Activated CD4-positive, alpha-beta T cell treated with anti-CD3 and anti-CD28 coated beads for 36 hours (primary cell): ENCODE measurements at regions of chr6 and their contacts with region 1.

Region 1: GRCh38 chr6:33200219-33201146 is at the starts of genes RXRB and SLC39A7:
- DNase-seq: peak; percentile 100
- ATAC-seq: peak; percentile 64
- H3K4me3 Mint-ChIP-seq: peak within 1 kb of the TSS; percentile 100
- H3K27ac Mint-ChIP-seq: peak within 1 kb of the TSS; percentile 99
- H3K4me1 Mint-ChIP-seq: peaks cover 64% of the 10 kb centered on the region
- H3K27me3 Mint-ChIP-seq: no peaks in the 10 kb centered on the region
- total RNA-seq, gene RXRB: 41.0 to 45.4 TPM
- total RNA-seq, gene SLC39A7: 33.0 to 41.8 TPM

Region 2: DNA sequence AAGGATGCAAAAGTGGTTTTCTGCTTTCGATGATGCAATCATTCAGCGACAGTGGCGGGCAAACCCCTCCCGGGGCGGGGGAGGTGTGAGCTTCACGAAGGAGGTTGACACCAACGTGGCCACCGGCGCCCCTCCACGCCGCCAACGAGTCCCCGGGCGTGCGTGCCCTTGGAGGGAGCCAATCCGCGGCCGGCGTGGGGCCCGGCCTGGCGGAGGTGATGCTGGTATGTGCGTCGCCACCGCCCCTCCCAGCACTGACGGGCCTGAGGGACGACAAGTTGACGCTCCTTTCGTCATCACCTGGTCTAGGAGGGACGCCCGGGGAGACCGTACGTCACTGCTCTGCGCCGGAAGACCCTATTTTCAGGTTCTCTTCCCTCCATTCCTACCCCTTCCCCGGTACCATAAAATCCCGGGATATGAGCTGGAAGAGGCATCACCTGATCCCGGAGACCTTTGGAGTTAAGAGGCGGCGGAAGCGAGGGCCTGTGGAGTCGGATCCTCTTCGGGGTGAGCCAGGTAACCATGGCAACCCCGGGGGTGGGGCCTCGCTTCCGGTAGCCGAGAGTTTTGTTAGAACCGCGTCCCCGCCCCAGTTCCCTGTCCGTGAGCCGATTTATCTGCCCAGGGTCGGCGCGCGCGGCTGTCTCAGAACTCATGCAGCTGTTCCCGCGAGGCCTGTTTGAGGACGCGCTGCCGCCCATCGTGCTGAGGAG is 1228.3 kb before region 1 on chr6 and contains the start of gene DXO:
- CTCF ChIA-PET with region 1: no interaction called
- POLR2A ChIA-PET with region 1: no interaction called
- intact Hi-C with region 1: loop called in 1 of 2 experiments (anchors 10 kb)
- DNase-seq: peak; percentile 99
- ATAC-seq: peak; percentile 96
- H3K4me3 Mint-ChIP-seq: peak within 1 kb of the TSS; percentile 96
- H3K27ac Mint-ChIP-seq: peak within 1 kb of the TSS; percentile 99
- H3K4me1 Mint-ChIP-seq: peaks cover 43% of the 10 kb centered on the region
- H3K27me3 Mint-ChIP-seq: no peaks in the 10 kb centered on the region
- total RNA-seq, gene DXO: 12.6 to 13.9 TPM

Region 3: GRCh38 chr6:32794510-32794909 is 406.0 kb before region 1 on chr6:
- CTCF ChIA-PET with region 1: no interaction called
- POLR2A ChIA-PET with region 1: no interaction called
- intact Hi-C with region 1: no loop called
- DNase-seq: no peak
- ATAC-seq: no peak
- H3K4me3 Mint-ChIP-seq: no peak overlapping the region
- H3K27ac Mint-ChIP-seq: no peak overlapping the region
- H3K4me1 Mint-ChIP-seq: peaks cover 22% of the 10 kb centered on the region
- H3K27me3 Mint-ChIP-seq: peaks cover 25% of the 10 kb centered on the region

Region 4: DNA sequence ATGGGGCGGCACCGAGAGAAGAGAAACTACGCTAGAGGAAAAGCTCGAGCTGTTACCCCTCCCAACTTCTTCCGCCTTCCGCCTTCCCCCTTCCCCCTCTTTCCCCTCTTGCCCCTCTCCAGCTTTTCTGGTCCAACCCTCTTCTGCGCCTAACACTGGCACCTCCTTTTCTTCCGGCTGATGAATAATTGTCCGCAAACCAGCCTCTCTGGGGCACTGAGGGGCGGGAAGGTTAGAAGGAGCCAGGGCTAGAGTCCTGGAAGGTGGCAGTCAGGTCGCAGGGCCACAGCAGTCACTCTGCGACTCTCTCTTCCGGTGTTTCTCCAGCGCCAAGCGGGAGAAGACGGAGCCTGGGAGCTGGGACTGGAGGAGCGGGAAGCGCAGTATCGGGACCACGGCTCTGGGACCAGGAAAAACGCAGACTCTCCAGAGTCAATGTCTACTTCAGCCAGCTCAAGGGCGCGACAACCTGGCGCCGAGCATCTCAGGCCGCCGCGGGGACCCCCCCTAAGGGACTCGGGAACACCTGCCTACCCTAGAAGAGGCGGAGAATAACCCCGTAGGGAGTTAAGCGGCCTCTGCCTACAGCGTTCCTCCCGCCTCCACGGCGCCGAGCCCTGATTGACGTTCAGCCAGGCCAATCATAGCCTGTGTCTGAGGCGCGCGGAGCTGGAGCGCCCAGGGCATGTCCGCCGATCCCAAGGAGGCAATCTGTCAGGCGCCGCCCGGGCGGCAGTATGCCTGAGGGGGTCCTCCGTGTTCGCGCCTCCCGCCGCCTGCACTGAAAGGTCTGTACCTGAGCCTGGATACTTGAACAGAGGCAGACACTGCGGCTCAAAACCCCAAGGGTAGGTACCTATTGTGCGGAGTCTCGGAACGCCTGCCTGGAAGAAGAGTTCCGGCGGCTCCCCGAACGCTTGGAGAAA is 306.1 kb before region 1 on chr6:
- CTCF ChIA-PET with region 1: no interaction called
- POLR2A ChIA-PET with region 1: no interaction called
- intact Hi-C with region 1: loop called in 1 of 2 experiments (anchors 1 kb)
- DNase-seq: peak; percentile 96
- ATAC-seq: peak; percentile 99
- H3K4me3 Mint-ChIP-seq: peak overlapping the region; percentile 93
- H3K27ac Mint-ChIP-seq: peak overlapping the region; percentile 94
- H3K4me1 Mint-ChIP-seq: peaks cover 25% of the 10 kb centered on the region
- H3K27me3 Mint-ChIP-seq: no peaks in the 10 kb centered on the region

Region 5: GRCh38 chr6:33183071-33183683 is 17.3 kb before region 1 on chr6:
- CTCF ChIA-PET with region 1: interaction called, 5 read pairs
- POLR2A ChIA-PET with region 1: no interaction called
- intact Hi-C with region 1: loop called (anchors 1 to 2 kb)
- DNase-seq: no peak
- ATAC-seq: peak; percentile 52
- H3K4me3 Mint-ChIP-seq: peak overlapping the region; percentile 22
- H3K27ac Mint-ChIP-seq: peak overlapping the region; percentile 97
- H3K4me1 Mint-ChIP-seq: peaks cover 23% of the 10 kb centered on the region
- H3K27me3 Mint-ChIP-seq: peaks cover 8% of the 10 kb centered on the region

Region 6: GRCh38 chr6:33299237-33299944 is 98.9 kb after region 1 on chr6:
- CTCF ChIA-PET with region 1: interaction called, 3 read pairs
- POLR2A ChIA-PET with region 1: no interaction called
- intact Hi-C with region 1: loop called in 1 of 2 experiments (anchors 1 kb)
- DNase-seq: peak; percentile 97
- ATAC-seq: peak; percentile 87
- H3K4me3 Mint-ChIP-seq: peak overlapping the region; percentile 80
- H3K27ac Mint-ChIP-seq: peak overlapping the region; percentile 98
- H3K4me1 Mint-ChIP-seq: peaks cover 28% of the 10 kb centered on the region
- H3K27me3 Mint-ChIP-seq: no peaks in the 10 kb centered on the region

Region 7: GRCh38 chr6:33417903-33418689 is 217.6 kb after region 1 on chr6 and contains the start of gene CUTA:
- CTCF ChIA-PET with region 1: no interaction called
- POLR2A ChIA-PET with region 1: no interaction called
- intact Hi-C with region 1: loop called (anchors 1 to 10 kb)
- DNase-seq: peak; percentile 100
- ATAC-seq: peak; percentile 87
- H3K4me3 Mint-ChIP-seq: peak within 1 kb of the TSS; percentile 96
- H3K27ac Mint-ChIP-seq: peak within 1 kb of the TSS; percentile 98
- H3K4me1 Mint-ChIP-seq: peaks cover 54% of the 10 kb centered on the region
- H3K27me3 Mint-ChIP-seq: no peaks in the 10 kb centered on the region
- total RNA-seq, gene CUTA: 154 to 188 TPM

Region 8: GRCh38 chr6:34696739-34697543 is 1496.5 kb after region 1 on chr6 and contains the start of gene ILRUN:
- CTCF ChIA-PET with region 1: no interaction called
- POLR2A ChIA-PET with region 1: no interaction called
- intact Hi-C with region 1: loop called in 1 of 2 experiments (anchors 10 kb)
- DNase-seq: peak; percentile 98
- ATAC-seq: peak; percentile 84
- H3K4me3 Mint-ChIP-seq: peak within 1 kb of the TSS; percentile 92
- H3K27ac Mint-ChIP-seq: peak within 1 kb of the TSS; percentile 99
- H3K4me1 Mint-ChIP-seq: peaks cover 45% of the 10 kb centered on the region
- H3K27me3 Mint-ChIP-seq: no peaks in the 10 kb centered on the region
- total RNA-seq, gene ILRUN: 56.2 to 66.9 TPM